PC-3 (cell line): ENCODE measurements at regions of chr3 and their contacts with region 1.

Region 1: GRCh38 chr3:46406788-46407611 is at the starts of genes CCR5AS and CCRL2:
- DNase-seq: peak; percentile 86
- ATAC-seq: peak; percentile 83
- H3K4me3 ChIP-seq: peak within 1 kb of the TSS; percentile 63
- H3K27ac ChIP-seq: peak within 1 kb of the TSS; percentile 95
- H3K4me1 ChIP-seq: peaks cover 43% of the 10 kb centered on the region
- H3K27me3 ChIP-seq: no peaks in the 10 kb centered on the region
- CTCF ChIP-seq: no peak
- total RNA-seq, gene CCRL2: 5.5 and 6.0 TPM in 2 replicates

Region 2: DNA sequence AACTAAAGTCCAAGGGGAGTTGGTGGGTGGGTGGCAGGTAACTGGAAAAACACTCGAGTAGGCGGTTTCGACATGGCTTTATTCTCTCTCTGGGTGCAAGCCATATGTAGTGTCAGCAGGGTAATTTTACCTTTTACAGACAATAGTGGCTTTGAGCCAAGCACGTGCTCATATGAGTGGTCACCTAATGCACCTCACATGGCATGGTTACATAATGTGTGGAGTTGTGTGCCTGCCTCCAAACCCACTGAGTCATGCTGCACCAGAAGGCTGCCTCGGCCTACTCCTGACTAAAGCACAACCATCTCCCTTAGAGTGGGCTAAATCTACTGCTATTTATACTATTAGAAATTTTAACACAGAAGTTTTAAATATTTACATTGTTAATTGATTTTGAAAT is 16.6 kb after region 1 on chr3:
- CTCF ChIA-PET with region 1: no interaction called
- POLR2A ChIA-PET with region 1: interaction called, 15 read pairs
- intact Hi-C with region 1: loop called (anchors 2 kb)
- DNase-seq: peak; percentile 73
- ATAC-seq: no peak
- H3K4me3 ChIP-seq: no peak overlapping the region
- H3K27ac ChIP-seq: peak overlapping the region; percentile 59
- H3K4me1 ChIP-seq: peaks cover 47% of the 10 kb centered on the region
- H3K27me3 ChIP-seq: no peaks in the 10 kb centered on the region
- CTCF ChIP-seq: no peak

Region 3: GRCh38 chr3:46693038-46693891 is 286.3 kb after region 1 on chr3 and contains the start of gene ALS2CL:
- CTCF ChIA-PET with region 1: no interaction called
- POLR2A ChIA-PET with region 1: no interaction called
- intact Hi-C with region 1: loop called (anchors 5 kb)
- DNase-seq: peak; percentile 70
- ATAC-seq: peak; percentile 52
- H3K4me3 ChIP-seq: peak within 1 kb of the TSS; percentile 82
- H3K27ac ChIP-seq: peak within 1 kb of the TSS; percentile 88
- H3K4me1 ChIP-seq: peaks cover 33% of the 10 kb centered on the region
- H3K27me3 ChIP-seq: no peaks in the 10 kb centered on the region
- CTCF ChIP-seq: no peak
- total RNA-seq, gene ALS2CL: 30.1 and 36.3 TPM in 2 replicates